CD4-positive, alpha-beta T cell (primary cell): ENCODE measurements at regions of chr2 and their contacts with region 1.

Region 1: DNA sequence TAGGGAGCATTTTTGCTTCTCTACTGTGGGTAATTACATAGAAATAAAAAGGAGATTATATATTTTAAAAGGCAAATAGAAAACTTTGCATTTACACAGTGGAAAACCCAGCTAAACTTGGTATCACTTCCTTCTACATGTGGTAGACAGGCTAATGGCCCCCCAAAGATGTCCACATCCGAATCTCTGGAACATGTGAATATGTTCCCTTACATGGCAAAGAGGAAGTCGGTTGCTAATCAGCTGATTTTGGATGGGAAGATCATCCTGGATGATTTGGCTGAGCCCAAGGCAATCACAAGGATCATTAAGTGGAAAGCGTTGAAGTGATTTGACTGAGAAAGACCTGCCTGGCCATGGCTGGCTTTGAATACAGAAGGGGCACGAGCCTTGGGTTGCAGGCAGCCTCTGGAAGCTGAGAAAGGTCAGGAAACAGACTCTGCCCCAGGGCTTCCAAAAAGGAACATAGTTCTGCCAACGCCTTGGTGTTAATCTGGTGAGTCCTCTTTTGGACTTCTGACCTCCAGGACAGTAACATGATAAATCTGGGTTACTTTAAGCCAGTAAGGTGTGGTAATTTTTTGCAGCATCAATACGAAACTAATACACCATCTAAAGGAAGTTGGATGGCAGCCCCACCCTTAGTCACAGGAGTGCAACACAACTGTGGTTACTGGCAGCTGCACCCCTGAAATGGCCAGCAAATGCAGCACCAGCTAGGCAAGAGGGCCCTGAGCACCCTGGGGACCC is 26.0 kb downstream of the CREG2 start:
- DNase-seq: peak in 10 of 14 experiments; percentile 9 to 69 (median 27)
- ATAC-seq: peak; percentile 71
- H3K4me3 ChIP-seq: peak overlapping the region; percentile 19
- H3K4me3 Mint-ChIP-seq: peak overlapping the region; percentile 65
- H3K27ac ChIP-seq: peak overlapping the region in 1 of 2 donors; percentile 55
- H3K27ac Mint-ChIP-seq: peak overlapping the region; percentile 72
- H3K4me1 ChIP-seq: peaks cover 19% of the 10 kb centered on the region
- H3K4me1 Mint-ChIP-seq: peaks cover 41% of the 10 kb centered on the region
- H3K27me3 ChIP-seq: no peaks in the 10 kb centered on the region
- H3K27me3 Mint-ChIP-seq: no peaks in the 10 kb centered on the region
- CTCF ChIP-seq: no peak

Region 2: GRCh38 chr2:101349893-101350662 is 11.2 kb before region 1 on chr2:
- CTCF ChIA-PET with region 1: interaction called, 6 read pairs
- POLR2A ChIA-PET with region 1: interaction called, 16 read pairs
- intact Hi-C with region 1: no loop called
- DNase-seq: peak in 3 of 14 experiments; percentile 43 to 50 (median 46)
- ATAC-seq: peak; percentile 73
- H3K4me3 ChIP-seq: no peak overlapping the region
- H3K4me3 Mint-ChIP-seq: no peak overlapping the region
- H3K27ac ChIP-seq: no peak overlapping the region
- H3K27ac Mint-ChIP-seq: no peak overlapping the region
- H3K4me1 ChIP-seq: peaks cover 7% of the 10 kb centered on the region
- H3K4me1 Mint-ChIP-seq: peaks cover 11% of the 10 kb centered on the region
- H3K27me3 ChIP-seq: no peaks in the 10 kb centered on the region
- H3K27me3 Mint-ChIP-seq: no peaks in the 10 kb centered on the region
- CTCF ChIP-seq: no peak

Region 3: DNA sequence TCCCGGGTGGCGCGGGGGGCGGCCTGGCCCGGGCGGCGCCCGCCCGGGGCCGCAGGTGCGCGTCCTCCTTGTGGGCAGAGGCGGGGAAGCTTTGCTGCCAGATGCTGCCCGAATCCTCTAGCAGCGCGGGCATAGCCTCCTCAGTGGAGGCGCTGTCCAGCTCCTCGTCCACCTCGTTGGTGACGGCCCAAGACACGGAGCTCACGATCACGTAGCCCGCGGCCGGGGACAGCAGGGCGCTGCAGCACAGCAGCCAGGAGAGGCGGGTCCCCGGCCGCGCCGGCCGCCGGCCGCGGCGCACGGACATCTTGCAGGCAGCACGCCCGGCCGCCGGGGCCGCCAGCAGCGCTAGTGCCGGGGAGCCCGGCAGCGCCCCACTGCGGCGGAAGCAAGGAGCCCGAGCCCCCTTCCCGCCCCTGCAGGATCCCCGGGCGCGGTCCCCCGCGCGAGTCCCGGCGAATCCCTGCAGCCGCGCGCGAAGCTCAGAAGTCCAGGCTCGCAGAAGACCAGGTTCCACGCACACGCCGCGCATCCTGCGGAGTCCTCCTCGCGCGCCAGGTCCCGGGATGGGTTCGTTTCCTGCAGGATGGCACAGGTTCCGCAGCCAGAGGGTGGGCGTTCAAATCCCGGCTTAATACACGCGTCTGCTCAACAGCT is 26.0 kb after region 1 on chr2 and contains the start of gene CREG2:
- CTCF ChIA-PET with region 1: no interaction called
- POLR2A ChIA-PET with region 1: interaction called, 22 read pairs
- intact Hi-C with region 1: no loop called
- DNase-seq: peak; percentile 27 to 80 (median 49)
- ATAC-seq: peak; percentile 93
- H3K4me3 ChIP-seq: peak within 1 kb of the TSS; percentile 44
- H3K4me3 Mint-ChIP-seq: peak within 1 kb of the TSS; percentile 79
- H3K27ac ChIP-seq: no peak within 1 kb of the TSS
- H3K27ac Mint-ChIP-seq: no peak within 1 kb of the TSS
- H3K4me1 ChIP-seq: peaks cover 13% of the 10 kb centered on the region
- H3K4me1 Mint-ChIP-seq: peaks cover 11% of the 10 kb centered on the region
- H3K27me3 ChIP-seq: peaks cover 20 to 38% of the 10 kb centered on the region in 2 experiments
- H3K27me3 Mint-ChIP-seq: peaks cover 61% of the 10 kb centered on the region
- CTCF ChIP-seq: peak; percentile 56
- total RNA-seq, gene CREG2: 0.03 TPM in 1 of 2 experiments, not detected in the other

Region 4: DNA sequence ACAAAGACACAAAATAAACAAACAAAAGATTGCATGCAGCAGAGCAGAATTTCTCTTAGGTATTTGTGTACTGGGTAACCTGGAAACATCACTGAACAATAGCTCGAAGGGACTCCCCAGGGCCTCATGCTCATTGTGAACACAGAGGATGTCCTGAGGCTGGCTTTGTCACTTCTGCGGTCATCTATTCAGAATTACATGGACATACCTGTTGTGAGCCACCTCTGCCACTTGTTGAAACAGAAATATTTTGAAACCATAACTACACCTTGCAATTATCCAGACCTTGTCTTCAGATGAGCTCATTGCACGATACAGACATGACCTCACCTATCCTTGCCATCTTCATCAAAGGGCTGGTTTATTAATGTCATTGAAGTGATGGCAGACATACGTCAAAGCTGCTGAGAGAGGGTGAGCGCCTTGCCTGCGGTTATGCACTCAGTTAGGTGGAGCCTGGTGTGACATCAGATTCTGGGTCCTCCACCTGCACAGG is 49.5 kb after region 1 on chr2:
- CTCF ChIA-PET with region 1: no interaction called
- POLR2A ChIA-PET with region 1: no interaction called
- intact Hi-C with region 1: no loop called
- DNase-seq: no peak
- ATAC-seq: no peak
- H3K4me3 ChIP-seq: no peak overlapping the region
- H3K4me3 Mint-ChIP-seq: no peak overlapping the region
- H3K27ac ChIP-seq: no peak overlapping the region
- H3K27ac Mint-ChIP-seq: no peak overlapping the region
- H3K4me1 ChIP-seq: no peaks in the 10 kb centered on the region
- H3K4me1 Mint-ChIP-seq: no peaks in the 10 kb centered on the region
- H3K27me3 ChIP-seq: no peaks in the 10 kb centered on the region
- H3K27me3 Mint-ChIP-seq: no peaks in the 10 kb centered on the region
- CTCF ChIP-seq: no peak